Heart left ventricle (tissue), 16 donors: ENCODE measurements at regions of chr6 and their contacts with region 1.

Region 1: GRCh38 chr6:150016324-150017185 is 8.8 kb downstream of the RAET1L start:
- DNase-seq: peak in 4 of 5 donors; percentile 37 to 68 (median 56)
- ATAC-seq: peak; percentile 59 to 86 (median 82)
- H3K4me3 ChIP-seq: no peak overlapping the region
- H3K27ac ChIP-seq: no peak overlapping the region
- H3K4me1 ChIP-seq: peaks cover 0 to 10% (median 0%) of the 10 kb centered on the region in 12 donors
- H3K27me3 ChIP-seq: peaks cover 20 to 71% (median 63%) of the 10 kb centered on the region in 9 donors
- CTCF ChIP-seq: peak; percentile 58 to 78 (median 66)
- POLR2A ChIP-seq: no peak

Region 2: GRCh38 chr6:149834513-149835481 is 181.8 kb before region 1 on chr6:
- intact Hi-C with region 1: loop called in 8 of 10 experiments (anchors 2 to 10 kb)
- DNase-seq: peak in 2 of 5 donors; percentile 36 to 50
- ATAC-seq: peak in 2 of 4 donors; percentile 42 to 62
- H3K4me3 ChIP-seq: no peak overlapping the region
- H3K27ac ChIP-seq: no peak overlapping the region
- H3K4me1 ChIP-seq: no peaks in the 10 kb centered on the region
- H3K27me3 ChIP-seq: no peaks in the 10 kb centered on the region
- CTCF ChIP-seq: peak; percentile 85 to 96 (median 93)
- POLR2A ChIP-seq: no peak

Region 3: DNA sequence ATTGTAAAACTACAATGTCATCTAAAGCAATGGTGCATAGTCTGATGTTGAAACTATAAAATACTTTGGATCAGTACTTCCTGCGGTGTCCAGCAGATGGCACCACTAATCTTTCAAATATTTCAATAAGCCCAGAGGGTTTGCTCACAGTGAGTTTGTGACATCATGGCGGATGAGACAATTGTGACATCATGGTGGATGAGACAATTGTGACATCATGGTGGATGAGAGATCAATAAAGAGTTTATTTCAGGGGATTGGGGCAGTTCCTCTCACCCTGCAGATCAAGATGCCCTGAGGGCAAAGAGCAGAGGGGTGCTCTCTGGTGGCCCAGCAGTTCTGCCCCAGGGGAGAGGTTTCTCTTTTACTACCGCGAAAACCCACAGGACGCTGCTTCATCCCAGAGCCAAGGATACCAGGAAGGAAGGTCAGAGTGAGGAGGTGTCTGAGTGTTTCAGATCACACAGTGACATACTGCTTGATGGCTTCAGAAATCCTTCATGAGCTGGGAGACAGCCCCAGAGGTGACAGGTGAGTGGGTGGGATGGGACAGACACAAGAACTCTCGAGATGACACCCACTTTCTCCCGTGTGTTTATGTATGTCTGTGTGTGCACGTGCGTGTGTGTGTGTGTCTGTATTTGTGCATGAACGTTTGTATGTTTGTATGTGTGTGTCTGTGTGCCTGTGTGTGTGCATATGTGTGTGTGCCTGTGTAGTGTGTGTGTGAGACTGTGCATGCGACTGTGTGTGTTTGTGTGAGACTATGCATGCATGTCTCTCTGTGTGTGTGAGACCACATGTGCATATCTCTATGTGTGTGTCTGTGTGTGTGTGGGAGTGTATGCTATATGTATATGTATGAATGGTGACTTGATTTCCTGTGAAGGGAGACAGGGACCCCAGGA is 82.1 kb before region 1 on chr6:
- intact Hi-C with region 1: loop called (anchors 1 to 2 kb)
- DNase-seq: peak in 2 of 5 donors; percentile 34 to 44
- ATAC-seq: peak in 3 of 4 donors; percentile 65 to 77 (median 69)
- H3K4me3 ChIP-seq: no peak overlapping the region
- H3K27ac ChIP-seq: no peak overlapping the region
- H3K4me1 ChIP-seq: peaks cover 0 to 13% (median 10%) of the 10 kb centered on the region in 12 donors
- H3K27me3 ChIP-seq: peaks cover 22 to 96% (median 64%) of the 10 kb centered on the region in 9 donors
- CTCF ChIP-seq: peak; percentile 70 to 86 (median 79)
- POLR2A ChIP-seq: no peak

Region 4: DNA sequence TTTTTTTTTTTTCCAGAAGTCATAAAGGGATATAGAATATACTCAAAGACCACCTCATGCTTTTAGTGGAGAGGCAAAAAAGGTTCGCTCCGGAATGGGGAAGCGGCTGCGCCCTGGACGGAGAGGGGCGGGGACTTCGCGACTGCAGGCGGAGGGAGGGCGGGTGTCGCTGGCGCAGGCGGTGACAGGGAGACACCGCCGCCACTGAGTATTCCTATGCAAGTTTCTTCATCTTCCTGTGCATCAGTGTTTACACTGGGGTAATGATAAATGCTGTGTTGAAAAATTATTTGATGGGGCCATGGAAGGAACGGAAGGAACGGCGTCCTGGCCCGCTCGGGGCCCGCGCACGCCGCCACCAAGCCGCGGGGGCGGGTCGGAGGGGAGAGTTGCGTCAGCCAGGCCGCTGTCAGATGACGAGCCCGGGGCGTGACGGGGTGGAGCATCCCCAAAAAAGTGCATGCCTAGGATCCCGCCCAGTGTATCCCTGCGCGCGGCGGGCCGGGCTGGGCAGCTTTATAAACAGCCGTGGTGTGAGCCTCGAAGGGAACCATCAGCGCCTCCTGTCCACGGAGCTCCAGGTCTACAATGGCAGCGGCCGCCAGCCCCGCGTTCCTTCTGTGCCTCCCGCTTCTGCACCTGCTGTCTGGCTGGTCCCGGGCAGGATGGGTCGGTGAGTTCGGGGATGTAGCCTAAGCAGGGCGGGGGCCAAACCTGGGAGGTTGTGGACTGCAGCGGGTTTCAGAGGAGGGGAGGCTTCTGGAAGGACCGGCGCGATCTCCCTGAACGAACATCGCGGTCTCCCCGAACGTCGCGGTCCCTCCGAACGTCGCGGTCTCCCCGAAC is 52.9 kb before region 1 on chr6 and contains the start of gene ULBP1:
- intact Hi-C with region 1: loop called in 1 of 10 experiments (anchors 10 kb)
- DNase-seq: peak; percentile 87 to 91 (median 89)
- ATAC-seq: peak; percentile 86 to 98 (median 96)
- H3K4me3 ChIP-seq: peak within 1 kb of the TSS; percentile 19 to 68 (median 54)
- H3K27ac ChIP-seq: peak within 1 kb of the TSS in 3 of 12 donors; percentile 3 to 35 (median 9)
- H3K4me1 ChIP-seq: peaks cover 0 to 28% (median 14%) of the 10 kb centered on the region in 12 donors
- H3K27me3 ChIP-seq: peaks cover 14 to 80% (median 37%) of the 10 kb centered on the region in 9 donors
- CTCF ChIP-seq: peak in 1 of 12 donors; percentile 8
- POLR2A ChIP-seq: peak in 1 of 2 donors; percentile 59
- total RNA-seq, gene ULBP1: 0.10 to 0.52 (median 0.25) TPM

Region 5: GRCh38 chr6:150037526-150038201 is 21.1 kb after region 1 on chr6:
- intact Hi-C with region 1: no loop called
- DNase-seq: no peak
- ATAC-seq: no peak
- H3K4me3 ChIP-seq: peak overlapping the region in 10 of 12 donors; percentile 7 to 33 (median 22)
- H3K27ac ChIP-seq: no peak overlapping the region
- H3K4me1 ChIP-seq: peaks cover 0 to 13% (median 10%) of the 10 kb centered on the region in 12 donors
- H3K27me3 ChIP-seq: peaks cover 24 to 78% (median 56%) of the 10 kb centered on the region in 9 donors
- CTCF ChIP-seq: no peak
- POLR2A ChIP-seq: no peak